ENCODE measurements at regions of chr12 and their contacts with region 1.

Region 1: GRCh38 chr12:121443193-121443870 is 43.4 kb downstream of the RNF34 start:
- DNase-seq: no peak
- H3K4me3 ChIP-seq: no peak overlapping the region
- CTCF ChIP-seq: peak; percentile 98

Region 2: DNA sequence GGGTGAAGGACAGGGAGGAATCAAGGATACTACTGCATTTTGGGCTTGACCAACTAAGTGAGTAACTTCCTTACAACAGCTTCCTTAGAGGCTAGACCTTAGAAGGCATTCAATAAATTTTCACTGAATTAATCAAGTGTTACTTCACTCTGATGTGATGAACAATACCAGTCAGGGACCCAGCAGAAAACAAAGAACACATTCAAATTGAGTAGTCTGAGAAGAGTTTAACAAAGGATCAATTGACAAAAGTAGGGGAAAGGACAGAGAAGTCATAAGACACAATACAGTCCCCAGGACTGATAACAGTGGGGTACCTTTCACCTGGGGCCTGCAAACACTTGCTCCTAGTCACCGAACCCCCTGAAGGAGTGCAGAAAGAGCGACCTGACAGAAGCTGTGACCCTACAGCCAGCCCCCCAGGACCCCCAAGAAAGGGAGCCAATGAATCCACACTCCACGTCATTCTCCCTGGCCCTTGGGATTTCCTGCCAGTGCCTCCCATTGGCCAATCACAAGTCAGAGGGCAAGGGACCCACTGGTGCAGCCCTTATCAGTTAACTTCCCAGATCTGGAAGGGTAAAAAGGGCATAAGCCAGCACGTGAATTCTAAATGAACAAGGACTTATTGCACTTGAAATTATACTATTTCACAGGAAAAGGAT is 98.0 kb before region 1 on chr12:
- CTCF ChIA-PET with region 1: interaction called, 371 read pairs
- POLR2A ChIA-PET with region 1: no interaction called
- DNase-seq: no peak
- H3K4me3 ChIP-seq: no peak overlapping the region
- CTCF ChIP-seq: no peak

Region 3: GRCh38 chr12:121404734-121405133 is 38.6 kb before region 1 on chr12:
- CTCF ChIA-PET with region 1: interaction called, 10 read pairs
- POLR2A ChIA-PET with region 1: no interaction called
- DNase-seq: no peak
- H3K4me3 ChIP-seq: no peak overlapping the region
- CTCF ChIP-seq: no peak

Region 4: GRCh38 chr12:121423682-121424623 is 19.4 kb before region 1 on chr12:
- CTCF ChIA-PET with region 1: interaction called, 82 read pairs
- POLR2A ChIA-PET with region 1: no interaction called
- DNase-seq: no peak
- H3K4me3 ChIP-seq: no peak overlapping the region
- CTCF ChIP-seq: no peak

Region 5: DNA sequence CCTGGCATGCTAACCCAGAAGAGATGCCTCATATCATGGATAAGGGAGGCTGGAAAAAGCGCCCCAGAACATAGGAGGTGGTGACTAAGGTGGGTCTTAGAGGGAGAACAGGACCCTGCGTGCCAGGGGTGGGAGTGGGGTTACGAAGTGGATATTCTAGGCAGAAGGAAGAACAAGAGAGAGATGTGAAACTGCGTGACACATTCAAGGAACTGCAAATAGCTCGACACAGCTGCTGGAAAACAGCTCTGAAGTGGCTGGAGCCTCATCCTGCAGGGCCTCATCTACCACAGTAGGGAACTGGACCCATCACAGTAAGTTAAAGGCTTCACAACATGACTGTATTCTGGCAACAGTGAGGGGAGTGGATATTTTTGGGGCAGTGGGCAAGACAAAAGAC is 17.7 kb after region 1 on chr12:
- CTCF ChIA-PET with region 1: interaction called, 92 read pairs
- POLR2A ChIA-PET with region 1: no interaction called
- DNase-seq: no peak
- H3K4me3 ChIP-seq: no peak overlapping the region
- CTCF ChIP-seq: no peak

Measured in AG04449 (cell line).